Activated T-helper 1 cell treated with anti-CD3 and anti-CD28 coated beads, Interleukin-12 subunit alpha, Interleukin-12 subunit beta, Interleukin-2, Interleukin-4 antibody, amounts not matched to agents 30 ng/mL and 10 ng/mL and 1 ng/mL, durations not matched to agents 14 hours and 24 hours and 36 hours (primary cell): ENCODE measurements at regions of chr10 and their contacts with region 1.

Region 1: GRCh38 chr10:94362360-94363250 is at the start of gene NOC3L:
- DNase-seq: peak; percentile 92
- H3K4me3 Mint-ChIP-seq: peak within 1 kb of the TSS; percentile 88
- H3K27ac Mint-ChIP-seq: peak within 1 kb of the TSS; percentile 93
- H3K4me1 Mint-ChIP-seq: peaks cover 41% of the 10 kb centered on the region
- H3K27me3 Mint-ChIP-seq: peaks cover 10% of the 10 kb centered on the region
- total RNA-seq, gene NOC3L: 47.7 and 47.8 TPM in 2 replicates

Region 2: GRCh38 chr10:93496322-93497041 is 866.1 kb before region 1 on chr10 and contains the start of gene CEP55:
- intact Hi-C with region 1: loop called (anchors 10 kb)
- DNase-seq: peak; percentile 96
- H3K4me3 Mint-ChIP-seq: peak within 1 kb of the TSS; percentile 88
- H3K27ac Mint-ChIP-seq: peak within 1 kb of the TSS; percentile 95
- H3K4me1 Mint-ChIP-seq: peaks cover 46% of the 10 kb centered on the region
- H3K27me3 Mint-ChIP-seq: no peaks in the 10 kb centered on the region
- total RNA-seq, gene CEP55: 53.0 and 55.7 TPM in 2 replicates

Region 3: GRCh38 chr10:93893646-93894515 is 468.7 kb before region 1 on chr10 and contains the start of gene SLC35G1:
- intact Hi-C with region 1: loop called (anchors 5 kb)
- DNase-seq: peak; percentile 57
- H3K4me3 Mint-ChIP-seq: peak within 1 kb of the TSS; percentile 85
- H3K27ac Mint-ChIP-seq: peak within 1 kb of the TSS; percentile 57
- H3K4me1 Mint-ChIP-seq: peaks cover 40% of the 10 kb centered on the region
- H3K27me3 Mint-ChIP-seq: peaks cover 6% of the 10 kb centered on the region
- total RNA-seq, gene SLC35G1: 5.6 and 5.8 TPM in 2 replicates

Region 4: DNA sequence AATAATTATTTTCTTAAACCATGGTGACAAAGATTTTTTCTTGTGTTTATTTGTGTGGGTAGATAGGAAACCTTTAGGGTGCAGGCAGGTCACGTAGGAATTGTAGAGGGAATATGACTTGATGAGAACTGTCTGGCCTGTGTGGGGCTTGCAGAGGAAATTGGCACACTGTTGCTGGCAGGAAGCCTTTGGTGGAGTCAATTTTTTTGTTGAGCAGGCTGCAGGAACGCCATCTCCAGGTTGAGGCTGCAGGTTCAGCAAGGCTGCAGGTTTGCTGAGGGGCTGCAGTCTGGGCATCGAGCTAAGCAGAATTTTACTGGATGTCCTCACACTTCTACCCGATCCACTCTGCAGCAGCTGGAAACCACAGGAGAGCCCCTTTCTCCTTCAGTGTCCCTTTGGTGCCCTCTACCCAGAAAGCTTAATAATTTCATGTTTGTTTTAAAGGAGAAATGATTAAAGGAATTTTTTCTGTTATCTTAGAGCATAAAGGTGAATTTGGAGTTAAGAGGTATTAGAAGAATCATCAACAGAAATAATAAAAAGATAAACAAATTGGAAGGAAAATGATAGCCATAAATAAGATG is 76.8 kb after region 1 on chr10:
- intact Hi-C with region 1: loop called (anchors 1 kb)
- DNase-seq: no peak
- H3K4me3 Mint-ChIP-seq: no peak overlapping the region
- H3K27ac Mint-ChIP-seq: no peak overlapping the region
- H3K4me1 Mint-ChIP-seq: no peaks in the 10 kb centered on the region
- H3K27me3 Mint-ChIP-seq: no peaks in the 10 kb centered on the region

Region 5: DNA sequence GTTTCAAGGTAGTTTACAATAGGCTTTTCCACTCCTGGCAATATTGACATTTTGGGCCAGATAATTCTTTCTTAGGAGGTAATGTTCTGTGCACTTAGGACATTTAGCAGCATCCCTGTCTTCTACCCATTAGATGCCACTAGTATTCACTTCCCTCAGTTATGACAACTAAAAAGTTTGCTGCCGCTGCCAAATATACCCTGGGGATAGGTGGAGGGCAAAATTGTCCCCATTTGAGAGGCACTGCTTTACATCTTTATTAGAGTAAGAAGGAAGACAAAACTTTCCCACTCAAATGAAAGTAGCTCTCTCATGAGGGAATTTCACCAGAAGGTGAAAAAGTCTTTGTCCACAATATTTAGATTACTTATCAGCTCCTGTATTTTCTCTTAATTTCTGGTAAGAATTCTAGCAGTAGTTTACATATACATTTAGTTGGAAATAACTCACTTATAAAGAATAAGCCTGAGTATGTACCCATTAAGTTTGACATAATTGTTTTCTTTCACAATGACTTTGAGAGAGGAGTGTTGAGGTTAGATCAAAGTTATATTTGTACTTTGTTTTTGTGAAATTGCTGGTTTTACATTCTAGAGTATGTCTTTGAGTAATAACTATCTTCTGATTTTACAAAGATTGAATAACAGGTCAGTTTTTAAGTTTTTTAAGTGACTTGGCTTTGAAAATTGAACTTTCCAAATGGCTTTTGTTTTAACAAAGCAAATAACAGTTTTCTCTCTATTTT is 229.0 kb after region 1 on chr10:
- intact Hi-C with region 1: loop called (anchors 2 kb)
- DNase-seq: no peak
- H3K4me3 Mint-ChIP-seq: peak overlapping the region; percentile 46
- H3K27ac Mint-ChIP-seq: peak overlapping the region; percentile 78
- H3K4me1 Mint-ChIP-seq: peaks cover 27% of the 10 kb centered on the region
- H3K27me3 Mint-ChIP-seq: no peaks in the 10 kb centered on the region

Region 6: DNA sequence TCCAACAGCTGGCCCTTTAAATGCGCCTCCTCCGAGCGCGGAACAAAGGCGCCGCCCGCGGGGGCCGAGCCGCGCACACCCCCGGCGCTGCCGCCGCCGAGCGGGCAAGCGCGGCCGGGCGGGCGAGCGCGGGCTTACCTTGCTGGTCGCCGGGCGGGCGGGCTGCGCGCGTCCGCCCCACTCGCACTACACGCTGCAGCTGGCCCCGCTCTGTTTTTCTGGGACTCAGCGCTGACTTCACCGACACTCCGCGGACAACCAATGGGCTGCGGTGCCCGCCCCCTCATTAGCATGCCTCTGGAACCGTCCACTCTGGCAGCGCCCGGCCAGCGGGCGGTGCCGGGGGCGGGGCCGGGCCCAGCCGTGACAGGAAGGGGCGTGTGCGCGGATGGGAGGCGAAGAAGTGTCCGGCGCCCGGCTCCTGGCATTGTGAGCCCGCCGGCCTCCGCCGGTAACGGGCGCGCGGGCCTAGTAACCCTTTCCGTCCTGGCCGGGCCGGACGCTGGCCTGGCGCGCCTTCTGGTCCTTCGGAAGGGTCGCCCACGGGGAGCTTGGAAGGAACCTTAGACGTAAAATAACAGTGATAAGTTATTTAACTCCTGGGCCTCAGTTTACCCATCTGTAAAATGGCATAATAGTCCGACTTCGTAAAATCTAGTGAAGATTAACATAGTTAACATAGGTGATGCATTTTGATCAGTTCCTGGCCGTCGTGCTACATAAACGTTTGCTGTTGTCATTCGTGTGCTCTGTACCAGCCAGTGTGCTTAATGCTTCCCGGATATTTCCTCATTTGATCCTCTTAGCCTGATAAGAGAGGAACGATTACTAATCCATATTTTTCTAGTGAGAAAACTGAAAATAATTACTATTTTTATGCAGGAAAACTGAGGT is 1198.8 kb after region 1 on chr10 and contains the start of gene SORBS1:
- intact Hi-C with region 1: loop called (anchors 2 kb)
- DNase-seq: peak; percentile 90
- H3K4me3 Mint-ChIP-seq: peak within 1 kb of the TSS; percentile 94
- H3K27ac Mint-ChIP-seq: peak within 1 kb of the TSS; percentile 77
- H3K4me1 Mint-ChIP-seq: peaks cover 15% of the 10 kb centered on the region
- H3K27me3 Mint-ChIP-seq: peaks cover 39% of the 10 kb centered on the region
- total RNA-seq, gene SORBS1: 0.59 and 0.73 TPM in 2 replicates